A673 (cell line): ENCODE measurements at regions of chr6 and their contacts with region 1.

Region 1: DNA sequence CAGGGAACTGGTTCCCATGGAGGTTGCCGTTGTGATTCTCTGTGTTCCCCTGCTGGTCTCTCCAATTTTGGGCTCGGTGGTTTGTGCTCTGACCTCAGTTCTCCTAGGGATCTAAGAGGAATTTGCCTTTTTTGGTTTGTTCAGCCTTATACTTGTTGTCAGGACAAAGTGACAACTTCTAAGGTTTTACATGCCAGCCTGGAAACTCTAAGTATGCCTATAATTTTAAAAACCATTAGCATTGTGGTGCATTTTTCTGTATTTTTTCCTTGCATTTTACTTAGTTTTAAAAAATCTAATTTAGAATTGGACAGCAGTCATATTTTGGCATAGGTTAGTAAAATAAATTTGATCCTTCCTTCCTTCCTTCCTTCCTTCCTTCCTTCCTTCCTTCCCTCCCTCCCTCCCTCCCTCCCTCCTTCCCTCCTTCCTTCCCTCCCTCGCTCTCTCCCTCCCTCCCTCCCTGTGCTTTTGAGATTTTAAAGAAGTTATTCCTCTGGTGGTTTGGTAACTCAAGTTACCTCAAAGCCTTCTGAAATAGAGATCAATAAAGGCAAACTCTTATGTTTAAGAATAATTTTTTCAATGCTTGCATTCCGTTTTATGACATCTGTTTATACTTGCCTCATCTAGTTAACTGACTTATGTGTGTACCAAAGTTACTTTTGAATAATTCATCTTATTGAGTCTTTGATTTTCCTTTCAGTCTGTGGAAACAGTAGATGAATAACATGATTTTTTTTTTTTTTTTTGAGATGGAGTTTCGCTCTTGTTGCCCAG is 141.3 kb upstream of the RGS17 start:
- DNase-seq: peak; percentile 90
- H3K4me3 ChIP-seq: peak overlapping the region; percentile 13
- H3K27ac ChIP-seq: peak overlapping the region; percentile 98
- H3K4me1 ChIP-seq: peaks cover 24% of the 10 kb centered on the region
- H3K27me3 ChIP-seq: no peaks in the 10 kb centered on the region
- CTCF ChIP-seq: no peak

Region 2: GRCh38 chr6:153023977-153024708 is 248.2 kb before region 1 on chr6:
- CTCF ChIA-PET with region 1: no interaction called
- POLR2A ChIA-PET with region 1: no interaction called
- intact Hi-C with region 1: no loop called
- DNase-seq: peak; percentile 72
- H3K4me3 ChIP-seq: no peak overlapping the region
- H3K27ac ChIP-seq: no peak overlapping the region
- H3K4me1 ChIP-seq: no peaks in the 10 kb centered on the region
- H3K27me3 ChIP-seq: no peaks in the 10 kb centered on the region
- CTCF ChIP-seq: peak; percentile 84

Region 3: DNA sequence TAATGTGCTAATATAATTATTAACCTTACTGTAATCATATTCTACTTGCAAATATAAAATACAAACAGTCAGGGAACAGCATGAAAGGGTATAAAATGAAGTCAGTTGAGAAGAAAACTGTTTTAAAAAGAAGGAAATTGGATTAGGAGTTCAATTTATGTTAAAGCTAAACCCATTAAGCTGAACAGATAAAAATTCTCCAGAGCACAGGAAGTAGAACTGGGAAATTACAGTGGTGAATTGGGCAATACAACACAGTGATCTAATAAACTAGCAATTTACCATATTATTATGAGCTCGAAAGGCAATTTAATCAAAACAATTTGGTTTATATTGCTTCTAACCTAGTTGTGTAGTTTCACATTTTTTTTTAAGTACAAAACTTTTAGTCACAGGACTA is 266.1 kb after region 1 on chr6:
- CTCF ChIA-PET with region 1: no interaction called
- POLR2A ChIA-PET with region 1: no interaction called
- intact Hi-C with region 1: loop called (anchors 2 kb)
- DNase-seq: peak; percentile 91
- H3K4me3 ChIP-seq: no peak overlapping the region
- H3K27ac ChIP-seq: no peak overlapping the region
- H3K4me1 ChIP-seq: peaks cover 18% of the 10 kb centered on the region
- H3K27me3 ChIP-seq: peaks cover 21% of the 10 kb centered on the region
- CTCF ChIP-seq: no peak